Colonic mucosa (tissue), 4 donors: ENCODE measurements at regions of chr3 and their contacts with region 1.

Region 1: DNA sequence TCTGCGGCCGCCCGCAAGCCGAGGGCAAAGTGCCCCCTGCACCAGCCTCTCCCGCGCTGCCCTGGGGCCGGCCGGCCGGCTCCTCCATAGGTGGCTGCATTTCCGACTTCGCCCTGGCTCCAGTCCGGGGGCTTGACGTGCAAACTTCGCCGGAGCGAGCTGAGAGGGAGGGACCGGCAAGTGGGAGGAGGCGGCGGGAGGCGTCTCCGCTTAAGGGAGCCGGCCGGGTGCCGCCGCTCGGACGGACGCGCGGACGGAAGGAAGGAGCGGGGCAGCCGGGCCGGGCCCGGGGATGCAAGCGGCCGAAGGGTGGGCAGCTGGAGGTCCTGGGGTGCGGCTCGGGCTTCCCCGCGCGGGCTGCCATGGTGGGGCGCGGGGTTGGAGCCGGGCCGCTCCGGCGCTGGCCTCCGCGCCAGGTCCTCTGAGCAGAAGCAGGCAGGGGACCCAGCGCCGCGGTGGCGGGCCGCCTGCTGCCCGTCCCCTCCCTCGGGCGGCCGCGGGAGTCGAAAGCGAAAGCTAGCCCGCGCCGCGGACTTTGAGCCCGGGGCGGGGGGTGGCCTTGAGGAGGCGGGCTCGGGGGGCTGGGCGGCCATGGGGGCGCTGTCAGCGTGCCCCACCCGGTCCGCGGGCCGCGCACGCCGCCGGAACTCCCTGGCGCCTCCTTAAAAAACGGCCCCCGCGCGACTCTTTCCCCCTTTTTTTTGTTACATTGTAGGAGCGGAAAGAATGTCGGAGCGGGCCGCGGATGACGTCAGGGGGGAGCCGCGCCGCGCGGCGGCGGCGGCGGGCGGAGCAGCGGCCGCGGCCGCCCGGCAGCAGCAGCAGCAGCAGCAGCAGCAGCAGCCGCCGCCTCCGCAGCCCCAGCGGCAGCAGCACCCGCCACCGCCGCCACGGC is at the start of gene SCAANT1:
- DNase-seq: peak; percentile 91
- H3K4me3 ChIP-seq: peak within 1 kb of the TSS; percentile 77
- H3K27ac ChIP-seq: peak within 1 kb of the TSS; percentile 99
- H3K4me1 ChIP-seq: no peaks in the 10 kb centered on the region
- H3K27me3 ChIP-seq: no peaks in the 10 kb centered on the region
- CTCF ChIP-seq: no peak
- total RNA-seq, gene SCAANT1: not detected

Region 2: GRCh38 chr3:63387568-63387967 is 524.6 kb before region 1 on chr3:
- intact Hi-C with region 1: no loop called
- DNase-seq: no peak
- H3K4me3 ChIP-seq: no peak overlapping the region
- H3K27ac ChIP-seq: no peak overlapping the region
- H3K4me1 ChIP-seq: no peaks in the 10 kb centered on the region
- H3K27me3 ChIP-seq: no peaks in the 10 kb centered on the region
- CTCF ChIP-seq: no peak

Region 3: GRCh38 chr3:63864965-63865327 is 47.2 kb before region 1 on chr3:
- intact Hi-C with region 1: loop called (anchors 5 kb)
- DNase-seq: no peak
- H3K4me3 ChIP-seq: peak overlapping the region; percentile 80
- H3K27ac ChIP-seq: peak overlapping the region; percentile 90
- H3K4me1 ChIP-seq: no peaks in the 10 kb centered on the region
- H3K27me3 ChIP-seq: no peaks in the 10 kb centered on the region
- CTCF ChIP-seq: no peak

Region 4: GRCh38 chr3:63980835-63981498 is 68.8 kb after region 1 on chr3:
- intact Hi-C with region 1: loop called (anchors 10 kb)
- DNase-seq: no peak
- H3K4me3 ChIP-seq: no peak overlapping the region
- H3K27ac ChIP-seq: no peak overlapping the region
- H3K4me1 ChIP-seq: no peaks in the 10 kb centered on the region
- H3K27me3 ChIP-seq: no peaks in the 10 kb centered on the region
- CTCF ChIP-seq: no peak